ENCODE measurements at regions of chr15 and their contacts with region 1.

Region 1: DNA sequence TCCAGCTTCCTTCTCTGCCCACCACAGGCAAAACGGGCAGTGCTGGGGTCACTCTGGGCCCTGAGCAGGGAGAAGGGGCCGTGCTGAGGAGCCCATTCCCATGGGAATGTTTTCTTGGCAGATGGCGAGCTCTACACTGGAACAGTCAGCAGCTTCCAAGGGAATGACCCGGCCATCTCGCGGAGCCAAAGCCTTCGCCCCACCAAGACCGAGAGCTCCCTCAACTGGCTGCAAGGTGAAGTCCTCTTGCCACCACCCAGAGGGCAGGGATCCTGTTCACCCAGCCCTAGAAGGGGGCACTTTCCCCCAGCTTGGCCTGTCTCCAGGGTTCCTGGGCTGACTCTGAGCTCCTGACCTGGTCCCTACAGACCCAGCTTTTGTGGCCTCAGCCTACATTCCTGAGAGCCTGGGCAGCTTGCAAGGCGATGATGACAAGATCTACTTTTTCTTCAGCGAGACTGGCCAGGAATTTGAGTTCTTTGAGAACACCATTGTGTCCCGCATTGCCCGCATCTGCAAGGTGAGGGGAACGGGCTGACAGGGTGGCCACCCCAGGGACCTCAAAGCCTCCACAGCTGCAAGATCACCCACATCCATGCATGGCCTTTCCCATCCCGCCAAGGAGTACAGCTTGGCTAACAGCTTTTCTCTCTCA is 12.4 kb downstream of the CIB1 start:
- DNase-seq: peak; percentile 37
- H3K4me3 Mint-ChIP-seq: no peak overlapping the region
- H3K27ac Mint-ChIP-seq: no peak overlapping the region
- H3K4me1 Mint-ChIP-seq: peaks cover 14% of the 10 kb centered on the region
- H3K27me3 Mint-ChIP-seq: no peaks in the 10 kb centered on the region

Region 2: DNA sequence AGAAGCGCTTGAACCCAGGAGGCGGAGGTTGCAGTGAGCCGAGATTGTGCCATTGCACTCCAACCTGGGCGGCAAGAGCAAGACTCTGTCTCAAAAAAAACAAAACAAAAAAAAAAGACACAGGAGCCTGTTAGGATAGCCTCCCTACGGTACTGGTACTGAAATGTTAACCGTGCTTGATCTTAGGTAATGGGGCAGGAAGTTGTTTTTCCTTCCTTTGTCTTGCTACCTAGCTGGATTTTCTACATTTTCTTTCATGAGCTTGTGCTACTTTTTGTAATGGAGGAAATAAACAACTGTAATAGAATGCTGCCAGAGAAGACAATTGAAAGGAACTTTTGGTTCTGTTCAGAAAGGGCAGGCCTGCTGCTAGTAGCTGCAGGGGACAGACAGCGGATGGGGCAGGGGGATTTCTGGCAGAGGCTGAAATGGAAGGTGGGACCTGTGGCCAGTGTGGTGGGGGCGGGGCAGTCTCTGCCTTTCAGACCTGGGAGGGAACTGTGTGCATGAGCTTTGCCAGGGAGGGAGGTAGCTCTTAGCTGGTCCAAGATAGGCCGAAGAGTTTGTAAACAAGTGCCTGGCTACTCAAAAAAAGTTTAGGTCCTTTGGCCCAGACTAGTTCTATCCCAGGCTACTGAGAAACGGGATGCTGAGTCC is 69.3 kb before region 1 on chr15:
- CTCF ChIA-PET with region 1: interaction called, 13 read pairs
- POLR2A ChIA-PET with region 1: no interaction called
- DNase-seq: no peak
- H3K4me3 Mint-ChIP-seq: no peak overlapping the region
- H3K27ac Mint-ChIP-seq: no peak overlapping the region
- H3K4me1 Mint-ChIP-seq: peaks cover 21% of the 10 kb centered on the region
- H3K27me3 Mint-ChIP-seq: no peaks in the 10 kb centered on the region

Region 3: DNA sequence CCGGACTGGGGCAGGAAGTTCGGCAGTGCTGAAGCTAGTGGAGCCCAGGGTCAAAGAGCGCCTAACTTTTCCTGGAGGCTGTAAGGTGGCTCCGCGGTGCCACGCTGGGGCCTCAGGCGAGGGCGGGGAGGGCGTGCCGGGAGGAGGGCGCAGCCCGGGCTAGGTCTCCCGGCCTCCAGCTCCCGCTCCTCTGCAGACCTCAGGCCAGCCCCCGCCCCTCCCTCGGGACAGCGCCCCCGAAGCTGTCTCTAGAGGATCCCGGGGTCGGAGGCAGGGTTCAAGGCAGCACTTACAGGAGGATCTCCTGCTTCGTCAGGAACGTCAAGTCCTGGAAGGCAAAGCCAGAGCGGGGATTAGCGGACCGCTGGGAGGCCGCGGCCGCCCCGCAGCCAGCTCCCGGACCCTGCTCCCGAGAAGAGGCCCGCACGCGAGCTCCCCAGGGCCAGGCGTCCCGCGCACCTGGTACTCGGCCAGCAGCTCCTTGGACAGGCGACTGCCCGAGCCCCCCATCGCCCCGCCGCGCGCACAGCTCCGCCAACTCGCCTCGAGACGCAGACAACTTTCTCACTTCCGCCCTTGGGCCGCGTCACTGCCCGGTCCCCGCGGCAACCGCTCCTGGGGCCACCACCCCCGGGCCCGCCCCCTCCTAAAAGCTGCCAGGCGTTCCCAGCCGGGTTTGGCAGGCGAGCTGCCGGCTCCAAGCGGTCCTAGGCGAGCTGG is 12.2 kb after region 1 on chr15 and contains the start of gene CIB1:
- CTCF ChIA-PET with region 1: interaction called, 13 read pairs
- POLR2A ChIA-PET with region 1: no interaction called
- DNase-seq: peak; percentile 96
- H3K4me3 Mint-ChIP-seq: peak within 1 kb of the TSS; percentile 98
- H3K27ac Mint-ChIP-seq: peak within 1 kb of the TSS; percentile 97
- H3K4me1 Mint-ChIP-seq: peaks cover 60% of the 10 kb centered on the region
- H3K27me3 Mint-ChIP-seq: no peaks in the 10 kb centered on the region
- total RNA-seq, gene CIB1: 75.4 to 83.5 TPM

Region 4: DNA sequence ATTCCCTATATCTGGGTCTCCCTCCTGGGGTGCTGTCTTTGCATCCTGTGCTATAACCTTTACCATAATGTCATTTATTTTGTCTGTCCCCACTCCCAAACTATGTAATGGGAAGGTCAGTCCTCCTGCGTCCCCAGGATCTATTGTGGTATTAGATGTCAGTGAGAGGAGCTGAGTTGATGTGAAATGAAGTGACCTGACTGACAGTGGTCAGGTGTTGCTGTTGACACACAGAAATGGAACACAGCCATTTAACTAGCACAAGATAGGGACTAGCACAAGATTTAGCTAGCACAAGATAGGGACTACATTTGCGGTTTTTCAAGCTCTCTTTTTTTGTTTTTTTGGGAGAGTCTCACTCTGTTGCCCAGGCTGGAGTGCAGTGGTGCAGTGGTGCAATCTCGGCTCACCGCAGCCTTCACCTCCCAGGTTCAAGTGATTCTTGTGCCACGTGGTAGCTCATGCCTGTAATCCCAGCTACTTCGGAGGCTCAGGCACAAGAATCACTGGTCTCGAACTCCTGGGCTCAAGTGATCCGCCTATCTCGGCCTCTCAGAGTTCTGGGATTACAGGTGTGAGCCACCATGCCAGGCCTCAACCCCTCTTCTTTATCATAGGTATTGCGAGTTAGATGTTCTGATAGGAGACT is 49.3 kb after region 1 on chr15:
- CTCF ChIA-PET with region 1: interaction called, 10 read pairs
- POLR2A ChIA-PET with region 1: no interaction called
- DNase-seq: no peak
- H3K4me3 Mint-ChIP-seq: no peak overlapping the region
- H3K27ac Mint-ChIP-seq: no peak overlapping the region
- H3K4me1 Mint-ChIP-seq: peaks cover 45% of the 10 kb centered on the region
- H3K27me3 Mint-ChIP-seq: no peaks in the 10 kb centered on the region

Region 5: GRCh38 chr15:90315278-90315986 is 94.1 kb after region 1 on chr15:
- CTCF ChIA-PET with region 1: no interaction called
- POLR2A ChIA-PET with region 1: no interaction called
- DNase-seq: no peak
- H3K4me3 Mint-ChIP-seq: no peak overlapping the region
- H3K27ac Mint-ChIP-seq: no peak overlapping the region
- H3K4me1 Mint-ChIP-seq: peaks cover 6% of the 10 kb centered on the region
- H3K27me3 Mint-ChIP-seq: peaks cover 21% of the 10 kb centered on the region

Measured in activated CD4-positive, alpha-beta T cell treated with anti-CD3 and anti-CD28 coated beads, Interleukin-2, amount 10 ng/mL, durations not matched to agents 7 days and 5 days (primary cell).